ENCODE measurements at regions of chr5 and their contacts with region 1.

Region 1: GRCh38 chr5:135560858-135561257 is 17.9 kb downstream of the CXCL14 start:
- DNase-seq: peak; percentile 82
- ATAC-seq: peak; percentile 91
- H3K4me3 Mint-ChIP-seq: no peak overlapping the region
- H3K27ac Mint-ChIP-seq: no peak overlapping the region
- H3K4me1 Mint-ChIP-seq: peaks cover 2% of the 10 kb centered on the region
- H3K27me3 Mint-ChIP-seq: peaks cover 30% of the 10 kb centered on the region

Region 2: GRCh38 chr5:135039271-135040045 is 521.4 kb before region 1 on chr5:
- CTCF ChIA-PET with region 1: no interaction called
- POLR2A ChIA-PET with region 1: no interaction called
- DNase-seq: no peak
- ATAC-seq: no peak
- H3K4me3 Mint-ChIP-seq: no peak overlapping the region
- H3K27ac Mint-ChIP-seq: no peak overlapping the region
- H3K4me1 Mint-ChIP-seq: peaks cover 12% of the 10 kb centered on the region
- H3K27me3 Mint-ChIP-seq: peaks cover 81% of the 10 kb centered on the region

Region 3: DNA sequence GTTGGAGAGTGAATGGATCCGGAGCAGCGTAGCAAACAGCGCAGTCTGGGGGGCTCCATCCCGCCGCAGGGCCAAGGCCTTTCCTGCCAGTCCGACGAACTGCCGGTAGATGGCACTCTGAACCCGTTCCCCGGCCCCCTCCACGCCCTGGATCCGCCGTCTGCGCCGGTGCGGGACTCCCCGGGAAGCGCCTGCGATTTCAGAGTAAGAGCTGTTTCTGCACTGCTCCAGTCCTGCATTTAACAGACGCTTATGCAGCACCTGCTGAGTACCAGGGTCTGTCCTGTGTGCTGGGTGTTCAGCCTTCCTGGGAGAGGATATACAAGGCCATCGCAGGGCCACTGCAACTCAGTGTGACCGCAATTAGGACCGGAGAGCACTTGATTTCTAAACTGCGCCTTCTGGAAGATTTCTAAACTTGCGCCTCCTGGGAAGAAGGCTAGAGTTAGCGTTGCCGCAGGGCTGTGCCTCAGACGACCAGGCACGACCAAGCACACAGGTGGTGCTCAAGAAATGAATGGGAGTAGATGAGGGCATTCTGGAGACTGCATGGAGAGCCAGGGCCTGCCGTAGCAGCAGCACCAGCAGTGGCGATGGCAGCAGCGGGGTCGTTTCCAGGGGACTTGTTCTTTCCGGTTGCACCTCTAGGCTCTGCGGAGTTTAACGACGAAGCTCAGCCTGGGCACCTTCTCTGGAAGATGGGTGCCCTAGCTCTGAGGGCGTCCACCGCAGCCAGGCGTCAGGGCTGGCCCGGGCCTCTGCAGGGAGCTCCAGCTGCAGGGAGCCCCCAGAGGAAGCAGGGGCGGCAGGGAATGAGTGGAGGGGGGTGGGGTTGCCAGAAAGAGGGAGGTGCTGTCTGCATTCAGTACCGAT is 94.4 kb before region 1 on chr5:
- CTCF ChIA-PET with region 1: interaction called, 553 read pairs
- POLR2A ChIA-PET with region 1: no interaction called
- DNase-seq: peak; percentile 78
- ATAC-seq: peak; percentile 86
- H3K4me3 Mint-ChIP-seq: no peak overlapping the region
- H3K27ac Mint-ChIP-seq: no peak overlapping the region
- H3K4me1 Mint-ChIP-seq: peaks cover 5% of the 10 kb centered on the region
- H3K27me3 Mint-ChIP-seq: peaks cover 46% of the 10 kb centered on the region

Measured in activated CD8-positive, alpha-beta T cell treated with anti-CD3 and anti-CD28 coated beads, Interleukin-2, amount 10 ng/mL, durations not matched to agents 7 days and 5 days (primary cell).